Heart right ventricle (tissue), 16 donors: ENCODE measurements at regions of chr7 and their contacts with region 1.

Region 1: DNA sequence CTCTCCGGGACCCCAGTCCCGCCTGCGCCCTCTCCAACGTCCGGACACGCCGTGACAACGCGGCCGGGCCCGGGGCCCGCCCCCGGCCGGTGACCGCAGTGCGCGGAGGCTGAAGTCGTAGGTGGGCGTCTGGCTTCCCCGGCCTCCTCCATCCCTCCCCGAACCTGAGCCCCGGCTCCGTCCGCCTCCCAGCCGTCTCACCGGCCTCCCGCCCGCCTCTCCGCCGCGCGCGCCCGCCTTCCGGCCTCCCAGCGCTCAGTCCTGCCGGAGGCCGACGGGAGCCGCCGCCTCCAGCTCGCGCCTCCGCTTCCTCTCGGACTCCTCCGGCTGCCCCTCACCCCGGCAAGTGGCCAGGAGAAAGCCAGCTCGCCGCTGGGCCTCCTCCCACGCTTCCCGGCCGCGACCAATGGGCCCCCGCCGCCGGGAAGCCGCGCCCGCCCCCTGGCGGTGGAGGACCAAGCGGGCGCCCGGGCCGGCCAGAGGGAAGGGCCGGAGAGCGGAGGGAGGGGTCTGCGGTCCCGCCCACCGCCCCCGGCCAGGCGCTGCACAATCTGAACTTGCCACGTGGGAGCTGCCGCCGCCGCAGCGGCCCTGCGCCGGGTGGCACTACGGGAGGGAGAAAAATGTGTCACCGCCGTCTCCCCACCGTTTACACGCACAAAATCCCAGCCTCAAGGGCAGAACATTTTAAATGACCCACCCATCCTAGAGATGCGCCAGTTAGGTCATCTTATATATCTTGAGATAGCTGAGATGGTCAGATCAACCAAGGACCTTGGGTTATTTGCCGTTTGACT is at the start of gene FAM3C:
- DNase-seq: peak; percentile 92 to 94
- ATAC-seq: peak; percentile 97 to 100 (median 99)
- H3K4me3 ChIP-seq: peak within 1 kb of the TSS; percentile 27 to 90 (median 81)
- H3K27ac ChIP-seq: peak within 1 kb of the TSS; percentile 20 to 92 (median 88)
- H3K4me1 ChIP-seq: peaks cover 0 to 28% (median 13%) of the 10 kb centered on the region in 9 donors
- H3K27me3 ChIP-seq: no peaks in the 10 kb centered on the region
- CTCF ChIP-seq: peak; percentile 91 to 99 (median 97)
- total RNA-seq, gene FAM3C: 33.3 to 51.8 (median 43.0) TPM

Region 2: GRCh38 chr7:120916121-120916520 is 480.0 kb before region 1 on chr7:
- intact Hi-C with region 1: no loop called
- DNase-seq: no peak
- ATAC-seq: no peak
- H3K4me3 ChIP-seq: no peak overlapping the region
- H3K27ac ChIP-seq: no peak overlapping the region
- H3K4me1 ChIP-seq: no peaks in the 10 kb centered on the region
- H3K27me3 ChIP-seq: no peaks in the 10 kb centered on the region
- CTCF ChIP-seq: no peak

Region 3: DNA sequence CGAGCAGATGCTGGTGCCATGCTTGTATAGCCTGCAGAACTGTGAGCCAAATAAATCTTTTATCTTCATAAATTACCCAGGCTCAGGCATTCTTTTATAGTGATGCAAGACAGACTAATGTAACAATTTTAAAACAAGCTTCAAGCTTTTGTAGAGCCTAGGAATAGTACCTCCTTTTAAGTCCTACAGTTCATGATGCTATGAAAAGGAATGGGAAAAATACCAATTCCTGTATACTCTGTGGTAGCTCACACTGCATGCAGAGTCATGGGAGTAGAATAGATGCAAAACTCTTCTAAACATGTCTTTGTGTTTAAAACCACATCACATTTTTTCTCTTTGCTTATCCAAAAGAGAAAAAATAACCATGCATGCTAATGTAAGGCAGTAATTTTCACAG is 133.9 kb before region 1 on chr7:
- intact Hi-C with region 1: no loop called
- DNase-seq: no peak
- ATAC-seq: no peak
- H3K4me3 ChIP-seq: no peak overlapping the region
- H3K27ac ChIP-seq: no peak overlapping the region
- H3K4me1 ChIP-seq: no peaks in the 10 kb centered on the region
- H3K27me3 ChIP-seq: no peaks in the 10 kb centered on the region
- CTCF ChIP-seq: no peak

Region 4: GRCh38 chr7:121437456-121438127 is 41.4 kb after region 1 on chr7:
- intact Hi-C with region 1: loop called in 1 of 10 experiments (anchors 5 kb)
- DNase-seq: no peak
- ATAC-seq: peak in 1 of 8 donors; percentile 52
- H3K4me3 ChIP-seq: peak overlapping the region in 3 of 10 donors; percentile 38 to 42 (median 39)
- H3K27ac ChIP-seq: peak overlapping the region in 3 of 10 donors; percentile 6 to 65 (median 48)
- H3K4me1 ChIP-seq: peaks cover 0 to 17% (median 8%) of the 10 kb centered on the region in 9 donors
- H3K27me3 ChIP-seq: no peaks in the 10 kb centered on the region
- CTCF ChIP-seq: no peak

Region 5: GRCh38 chr7:121449329-121449728 is 53.2 kb after region 1 on chr7:
- intact Hi-C with region 1: loop called in 2 of 10 experiments (anchors 5 kb)
- DNase-seq: no peak
- ATAC-seq: no peak
- H3K4me3 ChIP-seq: no peak overlapping the region
- H3K27ac ChIP-seq: peak overlapping the region in 1 of 10 donors; percentile 37
- H3K4me1 ChIP-seq: peaks cover 0 to 30% (median 15%) of the 10 kb centered on the region in 9 donors
- H3K27me3 ChIP-seq: peaks cover 0 to 6% (median 0%) of the 10 kb centered on the region in 7 donors
- CTCF ChIP-seq: no peak